ENCODE measurements at regions of chr20 and their contacts with region 1.

Region 1: DNA sequence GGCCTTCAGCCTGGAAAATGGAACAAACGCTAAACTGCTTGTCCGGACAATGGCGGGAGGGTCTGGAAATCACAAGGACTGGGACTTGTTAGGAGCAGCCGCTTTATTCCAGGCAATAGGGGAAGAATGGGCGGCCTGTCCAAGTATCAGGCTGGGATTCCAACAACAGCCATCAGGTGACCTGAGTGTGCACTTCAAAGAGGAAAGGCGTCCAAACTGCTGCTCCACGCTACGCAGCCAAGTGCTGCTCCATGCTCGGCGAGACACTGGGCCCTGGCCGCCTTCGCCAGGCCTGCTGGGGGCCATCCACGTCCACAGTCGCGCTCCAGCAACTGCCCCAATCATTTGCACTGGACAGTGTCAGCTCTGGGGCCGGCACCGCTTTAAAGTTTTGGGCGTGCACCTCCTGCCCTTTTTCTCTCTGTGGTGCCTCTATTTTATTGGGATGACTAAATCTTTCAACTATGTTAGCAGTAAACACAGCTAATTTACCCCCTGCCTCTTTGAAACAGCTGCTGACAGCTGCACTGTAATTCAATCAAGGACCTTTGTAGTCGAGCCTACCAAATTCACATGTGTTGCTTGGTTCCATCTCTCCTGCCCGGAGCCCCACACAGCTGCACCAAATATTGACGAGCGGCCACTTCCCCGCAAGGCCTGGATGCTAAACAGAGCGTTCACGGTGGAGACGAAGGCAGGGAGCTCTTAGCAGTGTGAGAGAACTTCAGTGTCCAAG is 98.3 kb downstream of the BMP7 start:
- DNase-seq: no peak
- H3K4me3 ChIP-seq: no peak overlapping the region
- H3K27ac ChIP-seq: no peak overlapping the region
- H3K4me1 ChIP-seq: no peaks in the 10 kb centered on the region
- H3K27me3 ChIP-seq: no peaks in the 10 kb centered on the region
- CTCF ChIP-seq: no peak
- POLR2A ChIP-seq: no peak

Region 2: DNA sequence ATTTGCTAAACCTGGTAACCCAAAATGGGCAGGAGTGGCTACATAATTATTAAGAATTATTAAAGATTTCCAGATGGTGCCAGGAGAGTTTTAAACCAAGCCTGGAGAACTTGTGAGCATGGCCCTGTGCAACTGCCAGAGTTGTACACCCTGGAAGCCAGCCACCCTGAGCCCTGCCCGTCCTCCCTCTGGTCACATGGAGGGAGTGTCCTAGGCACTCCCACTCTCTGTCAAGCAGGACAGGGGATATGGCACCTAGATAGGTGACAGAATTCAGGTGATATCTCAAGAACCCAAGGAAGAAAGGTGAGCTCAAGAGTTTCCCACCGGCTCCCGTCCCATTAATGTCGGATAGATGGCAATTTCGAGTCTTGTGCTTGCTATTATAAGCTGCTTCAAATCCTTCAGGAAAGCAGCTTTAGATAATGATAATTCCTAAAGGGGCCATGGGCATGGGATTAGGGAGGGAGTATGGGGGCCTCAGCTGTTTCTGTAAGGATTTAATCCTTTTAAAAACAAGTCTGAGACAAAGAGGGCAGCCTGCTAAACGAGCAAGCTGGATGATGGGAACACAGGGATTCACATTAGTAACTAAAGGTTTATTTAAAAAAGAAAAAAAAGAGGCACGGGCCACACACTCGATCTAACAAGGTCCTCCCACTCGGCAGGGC is 70.8 kb before region 1 on chr20:
- intact Hi-C with region 1: loop called (anchors 2 kb)
- DNase-seq: no peak
- H3K4me3 ChIP-seq: no peak overlapping the region
- H3K27ac ChIP-seq: no peak overlapping the region
- H3K4me1 ChIP-seq: no peaks in the 10 kb centered on the region
- H3K27me3 ChIP-seq: no peaks in the 10 kb centered on the region
- CTCF ChIP-seq: no peak
- POLR2A ChIP-seq: no peak

Region 3: DNA sequence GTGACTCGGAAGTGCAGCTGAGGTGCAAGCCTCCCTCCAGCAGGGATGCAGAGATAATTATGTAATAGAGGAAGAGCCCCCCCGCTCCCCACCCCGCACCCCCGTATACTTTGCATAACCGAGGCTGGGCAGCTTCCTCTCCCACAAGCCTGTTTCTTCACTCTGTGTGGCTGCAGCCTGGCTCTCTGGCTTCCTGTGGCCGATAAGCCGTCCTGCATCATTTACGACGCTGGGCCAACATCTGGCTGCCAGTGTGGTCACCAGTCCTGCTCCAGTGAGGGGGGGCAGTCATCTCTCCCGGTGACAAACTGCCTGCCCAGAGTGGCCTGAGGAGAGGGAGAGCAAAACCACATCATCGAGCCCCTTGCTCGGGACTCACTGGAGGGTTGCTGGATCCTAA is 282.3 kb after region 1 on chr20:
- intact Hi-C with region 1: no loop called
- DNase-seq: no peak
- H3K4me3 ChIP-seq: no peak overlapping the region
- H3K27ac ChIP-seq: no peak overlapping the region
- H3K4me1 ChIP-seq: no peaks in the 10 kb centered on the region
- H3K27me3 ChIP-seq: peaks cover 0 to 4% of the 10 kb centered on the region in 2 donors
- CTCF ChIP-seq: no peak
- POLR2A ChIP-seq: no peak